Endothelial cell of umbilical vein (primary cell): ENCODE measurements at regions of chr2 and their contacts with region 1.

Region 1: DNA sequence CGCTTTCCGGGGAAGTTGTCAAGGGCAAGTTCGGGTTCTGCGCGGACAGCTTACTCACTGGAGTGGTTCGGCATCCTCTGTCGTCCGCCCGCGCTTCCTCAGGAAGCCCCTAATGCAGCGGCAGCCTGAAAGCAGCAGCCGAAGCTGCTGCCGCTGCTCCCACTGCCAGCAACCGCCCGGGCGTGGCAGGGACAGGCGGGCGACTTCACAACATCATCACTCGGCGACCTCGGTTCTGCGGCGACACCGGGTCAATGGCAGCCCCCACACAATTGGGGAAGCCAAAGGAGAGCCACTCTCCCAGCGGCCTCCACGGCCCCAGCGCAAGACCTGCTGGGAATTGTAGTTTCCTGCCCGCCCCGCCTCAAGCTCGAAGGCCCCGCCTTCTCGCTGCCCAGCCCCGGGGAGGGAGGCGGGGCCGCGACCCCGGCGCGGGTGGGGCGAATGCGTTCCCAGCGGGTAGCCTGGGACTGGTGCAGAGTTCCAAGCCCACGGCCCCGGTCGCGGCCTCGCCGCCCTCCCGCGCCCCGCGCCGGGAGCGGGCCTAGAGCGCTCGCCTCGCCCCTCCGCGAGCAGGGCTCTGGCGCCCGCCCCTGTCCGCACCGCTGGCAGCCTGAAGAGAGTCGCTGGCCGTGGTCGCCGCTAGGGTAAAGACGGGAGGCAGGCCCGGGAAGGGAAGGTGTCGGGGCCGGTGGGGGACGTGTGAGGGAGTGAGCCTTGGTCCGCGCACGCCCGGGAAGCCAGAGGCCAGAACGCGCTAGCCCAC is at the starts of genes STRADB and TRAK2:
- DNase-seq: peak; percentile 95
- H3K4me3 ChIP-seq: peak within 1 kb of the TSS; percentile 86 to 91 (median 90)
- H3K27ac ChIP-seq: peak within 1 kb of the TSS; percentile 62
- H3K4me1 ChIP-seq: peaks cover 7% of the 10 kb centered on the region
- H3K27me3 ChIP-seq: no peaks in the 10 kb centered on the region
- CTCF ChIP-seq: peak in 1 of 2 donors; percentile 47
- POLR2A ChIP-seq: peak; percentile 85
- total RNA-seq, gene STRADB: 16.6 and 16.8 TPM in 2 replicates
- total RNA-seq, gene TRAK2: 35.7 and 38.5 TPM in 2 replicates

Region 2: GRCh38 chr2:201357241-201357640 is 94.2 kb before region 1 on chr2 and contains the start of gene FLACC1:
- CTCF ChIA-PET with region 1: no interaction called
- POLR2A ChIA-PET with region 1: no interaction called
- dilution Hi-C with region 1: no loop called
- intact Hi-C with region 1: no loop called
- DNase-seq: peak; percentile 24
- H3K4me3 ChIP-seq: no peak within 1 kb of the TSS
- H3K27ac ChIP-seq: no peak within 1 kb of the TSS
- H3K4me1 ChIP-seq: no peaks in the 10 kb centered on the region
- H3K27me3 ChIP-seq: no peaks in the 10 kb centered on the region
- CTCF ChIP-seq: no peak
- POLR2A ChIP-seq: no peak
- total RNA-seq, gene FLACC1: 1.4 TPM in 2 replicates

Region 3: GRCh38 chr2:201403880-201404279 is 47.6 kb before region 1 on chr2:
- CTCF ChIA-PET with region 1: interaction called, 3 read pairs
- POLR2A ChIA-PET with region 1: no interaction called
- dilution Hi-C with region 1: no loop called
- intact Hi-C with region 1: loop called (anchors 1 kb)
- DNase-seq: peak; percentile 66
- H3K4me3 ChIP-seq: no peak overlapping the region
- H3K27ac ChIP-seq: no peak overlapping the region
- H3K4me1 ChIP-seq: peaks cover 8% of the 10 kb centered on the region
- H3K27me3 ChIP-seq: no peaks in the 10 kb centered on the region
- CTCF ChIP-seq: no peak
- POLR2A ChIP-seq: no peak

Region 4: DNA sequence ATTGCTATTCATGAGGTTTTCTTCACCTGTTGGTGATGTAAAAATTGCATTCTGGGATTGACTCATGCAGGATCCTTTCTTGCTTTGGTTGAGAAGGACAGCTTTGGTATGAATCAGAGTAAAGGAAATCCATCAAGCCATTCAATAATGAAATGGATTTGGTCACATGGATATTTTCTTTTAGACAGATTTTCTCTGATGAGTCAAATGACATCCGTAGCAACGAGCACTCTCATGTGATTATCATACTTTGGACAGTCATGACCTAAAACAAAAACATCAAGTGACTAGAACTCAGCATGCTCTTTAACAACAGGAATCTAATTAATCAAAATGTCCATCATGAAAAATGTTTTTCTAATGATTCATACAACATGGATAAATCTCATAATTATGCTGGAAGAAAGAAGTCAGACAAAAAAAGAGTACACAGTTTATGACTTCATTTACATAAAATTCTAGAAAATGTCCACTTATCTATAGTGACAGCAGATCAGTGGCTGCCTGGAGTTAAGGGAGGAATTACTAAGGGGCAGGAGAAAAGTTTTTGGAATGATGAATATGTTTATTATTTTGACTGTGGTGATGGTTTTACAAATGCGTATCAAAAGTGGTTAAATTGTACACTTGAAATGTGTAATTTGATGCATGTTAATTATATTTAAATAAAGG is 30.9 kb before region 1 on chr2:
- CTCF ChIA-PET with region 1: no interaction called
- POLR2A ChIA-PET with region 1: no interaction called
- dilution Hi-C with region 1: no loop called
- intact Hi-C with region 1: loop called (anchors 1 kb)
- DNase-seq: peak; percentile 91
- H3K4me3 ChIP-seq: no peak overlapping the region
- H3K27ac ChIP-seq: peak overlapping the region; percentile 51
- H3K4me1 ChIP-seq: peaks cover 42% of the 10 kb centered on the region
- H3K27me3 ChIP-seq: no peaks in the 10 kb centered on the region
- CTCF ChIP-seq: no peak
- POLR2A ChIP-seq: no peak

Region 5: GRCh38 chr2:201466050-201466675 is 14.7 kb after region 1 on chr2:
- CTCF ChIA-PET with region 1: interaction called, 21 read pairs
- POLR2A ChIA-PET with region 1: no interaction called
- dilution Hi-C with region 1: no loop called
- intact Hi-C with region 1: no loop called
- DNase-seq: peak; percentile 71
- H3K4me3 ChIP-seq: no peak overlapping the region
- H3K27ac ChIP-seq: peak overlapping the region; percentile 10
- H3K4me1 ChIP-seq: peaks cover 10% of the 10 kb centered on the region
- H3K27me3 ChIP-seq: no peaks in the 10 kb centered on the region
- CTCF ChIP-seq: no peak
- POLR2A ChIP-seq: no peak

Region 6: GRCh38 chr2:201642579-201643215 is 191.2 kb after region 1 on chr2:
- CTCF ChIA-PET with region 1: no interaction called
- POLR2A ChIA-PET with region 1: no interaction called
- dilution Hi-C with region 1: no loop called
- intact Hi-C with region 1: loop called (anchors 2 kb)
- DNase-seq: peak; percentile 85
- H3K4me3 ChIP-seq: peak overlapping the region; percentile 62 to 93 (median 77)
- H3K27ac ChIP-seq: peak overlapping the region; percentile 87
- H3K4me1 ChIP-seq: peaks cover 12% of the 10 kb centered on the region
- H3K27me3 ChIP-seq: no peaks in the 10 kb centered on the region
- CTCF ChIP-seq: peak in 1 of 2 donors; percentile 7
- POLR2A ChIP-seq: peak; percentile 74

Region 7: GRCh38 chr2:201733544-201733943 is 282.1 kb after region 1 on chr2:
- CTCF ChIA-PET with region 1: interaction called, 4 read pairs
- POLR2A ChIA-PET with region 1: no interaction called
- dilution Hi-C with region 1: no loop called
- intact Hi-C with region 1: loop called (anchors 5 kb)
- DNase-seq: peak; percentile 86
- H3K4me3 ChIP-seq: peak overlapping the region in 1 of 3 experiments; percentile 40
- H3K27ac ChIP-seq: peak overlapping the region; percentile 23
- H3K4me1 ChIP-seq: peaks cover 38% of the 10 kb centered on the region
- H3K27me3 ChIP-seq: no peaks in the 10 kb centered on the region
- CTCF ChIP-seq: no peak
- POLR2A ChIP-seq: no peak